A673 (cell line): ENCODE measurements at regions of chr22 and their contacts with region 1.

Region 1: GRCh38 chr22:45949258-45949870 is 27.6 kb downstream of the WNT7B start:
- DNase-seq: no peak
- H3K4me3 ChIP-seq: no peak overlapping the region
- H3K27ac ChIP-seq: no peak overlapping the region
- H3K4me1 ChIP-seq: no peaks in the 10 kb centered on the region
- H3K27me3 ChIP-seq: no peaks in the 10 kb centered on the region
- CTCF ChIP-seq: no peak

Region 2: DNA sequence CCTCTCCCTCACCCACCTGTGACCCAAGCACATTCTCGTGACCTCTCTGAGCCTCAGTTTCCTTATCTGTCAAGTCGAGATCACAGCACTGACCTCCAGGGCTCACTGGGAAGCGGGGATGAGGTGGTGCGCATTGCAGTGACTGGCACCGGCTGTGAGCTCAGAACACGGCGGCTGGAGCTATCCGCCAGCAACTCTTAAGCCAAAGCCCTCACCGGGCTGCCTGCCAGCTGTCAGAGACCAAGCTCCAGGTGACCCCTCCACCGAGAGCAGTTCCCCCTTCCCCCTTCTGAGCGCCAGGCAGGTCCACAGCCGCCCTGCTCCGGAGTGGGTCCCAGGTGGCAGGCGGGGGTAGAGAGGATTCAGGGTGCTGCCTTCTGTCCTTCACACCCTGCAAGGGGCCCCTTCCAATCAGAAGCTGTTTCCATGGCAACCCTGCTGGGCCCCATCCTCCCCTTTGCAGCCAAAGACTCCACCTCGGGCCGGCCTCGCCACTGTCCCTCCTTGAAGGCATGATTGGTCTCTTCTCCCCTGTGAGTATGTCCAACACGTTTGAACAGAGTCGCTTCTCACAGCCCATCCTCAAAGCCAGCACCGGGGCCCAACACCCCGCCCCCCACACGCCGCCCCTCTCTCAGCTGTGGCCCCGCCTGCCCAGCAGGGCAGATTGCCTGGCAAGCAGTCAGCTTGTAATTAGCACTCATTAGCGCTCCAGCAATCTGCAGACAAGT is 71.1 kb before region 1 on chr22:
- CTCF ChIA-PET with region 1: no interaction called
- POLR2A ChIA-PET with region 1: no interaction called
- intact Hi-C with region 1: no loop called
- DNase-seq: no peak
- H3K4me3 ChIP-seq: no peak overlapping the region
- H3K27ac ChIP-seq: no peak overlapping the region
- H3K4me1 ChIP-seq: no peaks in the 10 kb centered on the region
- H3K27me3 ChIP-seq: peaks cover 17% of the 10 kb centered on the region
- CTCF ChIP-seq: no peak

Region 3: GRCh38 chr22:45960477-45961386 is 11.4 kb after region 1 on chr22:
- CTCF ChIA-PET with region 1: no interaction called
- POLR2A ChIA-PET with region 1: interaction called, 30 read pairs
- intact Hi-C with region 1: no loop called
- DNase-seq: no peak
- H3K4me3 ChIP-seq: no peak overlapping the region
- H3K27ac ChIP-seq: no peak overlapping the region
- H3K4me1 ChIP-seq: no peaks in the 10 kb centered on the region
- H3K27me3 ChIP-seq: no peaks in the 10 kb centered on the region
- CTCF ChIP-seq: no peak